B cell (primary cell): ENCODE measurements at regions of chr19 and their contacts with region 1.

Region 1: DNA sequence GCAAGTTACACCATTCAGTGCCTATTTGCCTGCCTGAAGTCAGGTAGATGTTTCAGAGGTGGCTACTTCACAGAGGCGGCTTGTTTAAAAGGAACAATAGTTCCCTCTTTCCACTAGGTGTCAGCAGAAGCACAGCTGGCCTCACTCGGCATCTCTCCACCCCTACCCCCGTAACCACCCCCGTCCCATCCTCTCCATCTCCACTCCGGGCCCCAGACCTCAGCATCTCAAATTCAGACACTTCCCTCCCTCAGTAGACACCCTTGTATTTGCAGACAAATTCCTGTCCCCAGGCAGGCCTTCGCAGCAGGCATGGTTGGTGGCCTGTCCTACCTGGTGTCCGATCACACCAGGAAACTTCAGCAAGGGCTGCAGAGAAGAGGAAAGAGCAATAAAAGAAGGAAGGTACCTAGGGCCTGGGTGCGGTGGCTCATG is 9.1 kb upstream of the DPP9 start:
- DNase-seq: peak; percentile 80
- ATAC-seq: peak; percentile 97
- H3K4me3 ChIP-seq: peak overlapping the region in 1 of 5 experiments; percentile 30
- H3K4me3 Mint-ChIP-seq: peak overlapping the region; percentile 54
- H3K27ac ChIP-seq: no peak overlapping the region
- H3K27ac Mint-ChIP-seq: no peak overlapping the region
- H3K4me1 ChIP-seq: peaks cover 3 to 6% of the 10 kb centered on the region in 2 donors
- H3K4me1 Mint-ChIP-seq: peaks cover 5% of the 10 kb centered on the region
- H3K27me3 ChIP-seq: peaks cover 0 to 5% (median 1%) of the 10 kb centered on the region in 4 experiments
- H3K27me3 Mint-ChIP-seq: peaks cover 7% of the 10 kb centered on the region
- CTCF ChIP-seq: peak; percentile 78

Region 2: GRCh38 chr19:4803736-4804695 is 71.3 kb after region 1 on chr19:
- CTCF ChIA-PET with region 1: interaction called, 13 read pairs
- POLR2A ChIA-PET with region 1: no interaction called
- intact Hi-C with region 1: loop called (anchors 1 kb)
- DNase-seq: peak; percentile 80
- ATAC-seq: peak; percentile 94
- H3K4me3 ChIP-seq: no peak overlapping the region
- H3K4me3 Mint-ChIP-seq: no peak overlapping the region
- H3K27ac ChIP-seq: no peak overlapping the region
- H3K27ac Mint-ChIP-seq: no peak overlapping the region
- H3K4me1 ChIP-seq: peaks cover 4 to 11% of the 10 kb centered on the region in 2 donors
- H3K4me1 Mint-ChIP-seq: peaks cover 15% of the 10 kb centered on the region
- H3K27me3 ChIP-seq: no peaks in the 10 kb centered on the region
- H3K27me3 Mint-ChIP-seq: no peaks in the 10 kb centered on the region
- CTCF ChIP-seq: peak; percentile 82